Activated CD4-positive, alpha-beta T cell treated with anti-CD3 and anti-CD28 coated beads, Interleukin-2, amount 10 ng/mL, durations not matched to agents 24 days and 14 days (primary cell): ENCODE measurements at regions of chr20 and their contacts with region 1.

Region 1: GRCh38 chr20:35463455-35464300 is 8.3 kb downstream of the CEP250 start:
- DNase-seq: peak; percentile 90
- H3K4me3 Mint-ChIP-seq: no peak overlapping the region
- H3K27ac Mint-ChIP-seq: no peak overlapping the region
- H3K4me1 Mint-ChIP-seq: no peaks in the 10 kb centered on the region
- H3K27me3 Mint-ChIP-seq: no peaks in the 10 kb centered on the region

Region 2: DNA sequence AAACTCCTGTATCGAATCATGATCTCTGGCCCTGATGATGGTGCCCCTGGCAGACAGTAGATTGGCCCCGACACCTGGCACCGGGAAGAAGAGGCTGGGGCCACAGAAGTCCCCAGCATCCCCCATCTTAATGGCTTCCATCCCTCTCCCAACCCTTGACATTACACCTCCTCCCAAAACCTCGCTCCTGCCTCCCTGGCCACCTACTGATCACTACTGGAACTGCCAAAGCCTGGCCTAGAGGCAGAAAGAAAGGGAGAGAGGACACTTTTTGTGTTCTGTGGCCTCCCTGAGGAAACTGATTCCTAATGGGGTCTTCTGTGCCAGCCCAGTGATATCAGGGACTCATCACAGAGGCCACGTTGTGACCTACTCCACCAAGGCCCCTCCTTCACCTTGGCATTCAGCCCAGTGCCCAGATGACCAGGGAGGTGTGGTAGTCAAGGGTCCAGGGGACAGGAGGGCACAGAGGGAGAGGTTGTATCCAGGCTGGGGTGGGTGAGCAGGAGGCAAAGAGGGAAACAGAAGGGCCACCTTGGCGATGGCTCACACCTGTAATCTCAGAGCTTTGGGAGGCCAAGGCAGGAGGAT is 59.7 kb after region 1 on chr20:
- intact Hi-C with region 1: loop called (anchors 5 kb)
- DNase-seq: peak; percentile 79
- H3K4me3 Mint-ChIP-seq: no peak overlapping the region
- H3K27ac Mint-ChIP-seq: no peak overlapping the region
- H3K4me1 Mint-ChIP-seq: no peaks in the 10 kb centered on the region
- H3K27me3 Mint-ChIP-seq: no peaks in the 10 kb centered on the region

Region 3: DNA sequence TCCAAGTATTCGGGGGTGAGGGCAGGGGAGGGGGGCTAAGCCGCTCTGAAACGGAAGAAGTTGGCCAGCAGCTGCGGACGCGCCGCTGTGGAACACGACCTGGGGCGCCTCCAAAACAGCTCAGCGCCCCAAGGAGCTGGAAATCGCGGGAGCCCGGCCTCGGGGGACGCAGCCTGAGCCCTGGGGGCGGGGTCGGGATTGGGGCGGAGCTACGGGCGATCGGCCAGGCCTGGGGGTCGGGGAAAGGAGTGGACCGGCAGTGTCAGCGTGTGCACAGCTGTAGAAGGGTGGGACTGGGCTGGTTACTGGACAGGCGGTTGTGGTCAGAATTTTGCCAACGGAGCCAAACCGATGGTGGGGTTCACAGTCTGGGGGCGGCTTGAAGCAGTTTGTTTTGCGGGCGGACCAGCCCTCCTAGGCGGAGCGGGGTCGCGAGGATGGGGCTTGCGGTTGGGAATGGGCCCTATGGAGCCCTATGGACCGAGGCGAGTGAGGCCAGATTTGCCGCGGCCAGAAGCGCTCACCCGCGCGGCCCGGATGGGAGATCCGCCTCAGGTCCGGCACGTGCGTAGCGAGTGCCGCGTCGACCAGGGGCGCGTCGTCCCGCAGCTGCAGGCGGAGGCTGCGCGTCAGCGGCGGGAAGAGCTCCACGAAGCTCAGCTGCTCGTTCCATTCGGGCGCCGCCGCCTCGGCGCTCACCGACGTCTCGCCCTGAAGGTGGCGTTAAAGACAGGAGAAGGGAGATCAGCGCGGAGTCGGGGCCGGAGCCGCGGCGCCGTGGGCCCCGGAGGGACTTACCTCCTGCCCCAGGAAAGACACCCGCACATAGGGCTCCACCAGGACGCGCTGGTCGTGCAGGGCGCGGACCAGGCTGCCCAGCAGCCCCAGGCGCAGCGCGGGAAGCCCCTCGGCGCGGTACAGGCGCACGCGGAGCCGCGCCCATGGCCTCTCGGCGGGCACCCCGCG is 137.6 kb after region 1 on chr20:
- intact Hi-C with region 1: loop called (anchors 1 kb)
- DNase-seq: peak; percentile 95
- H3K4me3 Mint-ChIP-seq: peak overlapping the region; percentile 81
- H3K27ac Mint-ChIP-seq: peak overlapping the region; percentile 63
- H3K4me1 Mint-ChIP-seq: peaks cover 9% of the 10 kb centered on the region
- H3K27me3 Mint-ChIP-seq: peaks cover 61% of the 10 kb centered on the region

Region 4: GRCh38 chr20:35883778-35884540 is 420.3 kb after region 1 on chr20:
- intact Hi-C with region 1: loop called (anchors 10 kb)
- DNase-seq: peak; percentile 88
- H3K4me3 Mint-ChIP-seq: no peak overlapping the region
- H3K27ac Mint-ChIP-seq: no peak overlapping the region
- H3K4me1 Mint-ChIP-seq: peaks cover 10% of the 10 kb centered on the region
- H3K27me3 Mint-ChIP-seq: no peaks in the 10 kb centered on the region

Region 5: DNA sequence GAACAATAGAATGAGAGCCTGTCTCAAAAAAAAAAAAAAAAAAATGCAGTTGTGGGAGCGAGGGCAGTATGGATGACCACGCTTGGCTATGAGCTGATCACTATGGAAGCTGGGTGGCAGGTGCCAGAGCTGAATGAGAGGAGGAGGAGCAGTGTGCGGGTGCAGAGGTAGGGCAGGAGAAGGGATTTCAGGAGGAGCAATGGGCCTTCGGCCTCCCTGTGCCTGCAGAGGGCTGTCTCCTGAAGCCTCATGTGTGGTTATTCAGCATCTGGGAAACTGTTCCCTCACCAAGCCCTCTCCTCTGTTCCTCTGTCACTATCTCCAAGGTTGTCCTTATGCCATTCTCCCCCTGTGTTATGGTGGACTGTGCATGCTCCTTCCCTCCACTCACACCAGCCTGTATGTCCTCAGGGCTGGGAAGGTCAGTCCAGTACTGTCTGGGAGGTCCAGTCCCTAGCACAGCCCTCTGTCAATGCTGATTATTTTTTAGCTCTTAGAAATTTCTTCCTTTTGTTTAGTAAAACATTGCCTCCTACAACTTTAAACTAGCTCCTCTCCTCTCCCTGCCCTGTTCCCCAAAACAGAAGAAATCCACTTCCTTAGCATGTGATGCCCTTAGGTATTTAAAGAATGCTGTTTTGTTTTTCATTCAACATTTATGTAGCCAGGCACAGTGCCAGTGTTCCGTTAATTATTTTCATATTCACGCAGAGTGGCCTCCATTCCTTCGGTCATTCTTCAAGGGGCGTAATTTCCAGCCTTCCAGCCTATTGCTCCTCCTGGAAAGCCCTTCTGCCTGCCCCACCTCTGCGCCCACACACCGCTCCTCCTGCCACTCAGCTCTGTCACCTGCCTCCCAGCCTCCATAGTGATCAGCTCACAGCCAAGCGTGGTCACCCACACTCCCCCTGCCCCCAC is 553.6 kb after region 1 on chr20:
- intact Hi-C with region 1: no loop called
- DNase-seq: no peak
- H3K4me3 Mint-ChIP-seq: no peak overlapping the region
- H3K27ac Mint-ChIP-seq: no peak overlapping the region
- H3K4me1 Mint-ChIP-seq: no peaks in the 10 kb centered on the region
- H3K27me3 Mint-ChIP-seq: peaks cover 3% of the 10 kb centered on the region